ENCODE measurements at regions of chr16 and their contacts with region 1.

Region 1: DNA sequence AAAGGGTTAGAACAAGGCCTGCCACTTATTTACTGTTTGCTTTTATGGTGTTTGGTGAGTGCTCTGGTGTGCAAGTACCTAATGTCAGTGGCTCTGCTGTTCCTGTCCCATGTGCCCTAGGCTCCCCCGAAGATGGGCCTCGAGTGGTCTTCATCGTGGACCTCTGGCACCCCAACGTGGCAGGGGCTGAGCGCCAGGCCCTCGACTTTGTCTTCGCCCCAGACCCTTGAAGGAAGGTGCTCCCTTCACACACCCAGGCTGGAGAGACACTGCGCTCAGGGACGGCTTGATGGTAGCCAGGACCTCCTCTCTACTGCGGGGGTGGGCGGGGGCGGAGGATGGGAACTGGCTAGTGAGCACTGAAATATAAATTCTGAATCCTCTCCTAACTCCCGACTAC is 5.4 kb downstream of the ASPHD1 start:
- DNase-seq: no peak
- H3K4me3 ChIP-seq: no peak overlapping the region
- H3K27ac ChIP-seq: no peak overlapping the region
- H3K4me1 ChIP-seq: peaks cover 4% of the 10 kb centered on the region
- H3K27me3 ChIP-seq: no peaks in the 10 kb centered on the region
- CTCF ChIP-seq: no peak
- POLR2A ChIP-seq: no peak

Region 2: GRCh38 chr16:29845656-29846055 is 60.0 kb before region 1 on chr16:
- intact Hi-C with region 1: loop called (anchors 2 kb)
- DNase-seq: no peak
- H3K4me3 ChIP-seq: no peak overlapping the region
- H3K27ac ChIP-seq: peak overlapping the region; percentile 61
- H3K4me1 ChIP-seq: peaks cover 18% of the 10 kb centered on the region
- H3K27me3 ChIP-seq: no peaks in the 10 kb centered on the region
- CTCF ChIP-seq: no peak
- POLR2A ChIP-seq: no peak

Region 3: GRCh38 chr16:29961479-29962343 is 56.0 kb after region 1 on chr16 and contains the start of gene TMEM219:
- intact Hi-C with region 1: no loop called
- DNase-seq: no peak
- H3K4me3 ChIP-seq: peak within 1 kb of the TSS; percentile 68 to 81
- H3K27ac ChIP-seq: peak within 1 kb of the TSS; percentile 94
- H3K4me1 ChIP-seq: peaks cover 16% of the 10 kb centered on the region
- H3K27me3 ChIP-seq: no peaks in the 10 kb centered on the region
- CTCF ChIP-seq: peak in 2 of 3 experiments; percentile 28 to 59
- POLR2A ChIP-seq: peak in 1 of 2 donors; percentile 42
- total RNA-seq, gene TMEM219: 85.7 TPM

Region 4: DNA sequence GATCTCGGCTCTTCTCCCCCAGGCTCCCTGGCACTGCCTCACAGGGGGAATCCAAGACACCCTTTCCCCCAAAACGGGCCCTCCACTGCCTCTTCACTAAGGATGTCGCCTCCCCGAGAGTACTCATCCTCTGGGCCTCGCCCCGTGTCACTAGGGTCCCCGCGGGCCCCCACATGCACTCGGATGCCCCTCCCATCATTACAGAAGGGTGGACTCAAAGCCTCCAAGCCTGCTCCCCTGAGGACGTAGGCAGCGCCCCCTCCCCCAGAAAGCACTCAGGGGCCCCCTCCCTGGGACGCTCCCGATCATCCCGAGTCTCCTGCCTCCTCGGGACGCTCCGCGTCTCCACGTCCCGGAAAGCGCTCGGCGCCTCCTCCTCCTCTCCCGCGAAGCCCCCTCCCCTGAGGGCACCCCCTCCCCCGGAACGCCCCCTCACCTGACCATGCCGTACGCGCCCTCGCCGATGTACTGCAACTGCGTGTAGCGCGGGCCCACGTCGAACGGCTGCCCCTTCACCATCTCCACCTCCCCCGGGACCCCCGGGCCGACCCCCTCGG is 217.0 kb after region 1 on chr16:
- intact Hi-C with region 1: no loop called
- DNase-seq: no peak
- H3K4me3 ChIP-seq: peak overlapping the region; percentile 96 to 100
- H3K27ac ChIP-seq: peak overlapping the region; percentile 99
- H3K4me1 ChIP-seq: peaks cover 40% of the 10 kb centered on the region
- H3K27me3 ChIP-seq: no peaks in the 10 kb centered on the region
- CTCF ChIP-seq: no peak
- POLR2A ChIP-seq: no peak

Measured in vagina (tissue), 2 donors.